Naive thymus-derived CD4-positive, alpha-beta T cell (primary cell): ENCODE measurements at regions of chr5 and their contacts with region 1.

Region 1: GRCh38 chr5:121962347-121962670 is 534 bp downstream of the SRFBP1 start:
- DNase-seq: no peak
- ATAC-seq: no peak
- H3K4me3 ChIP-seq: peak overlapping the region; percentile 85
- H3K4me3 Mint-ChIP-seq: peak overlapping the region; percentile 95 to 99 (median 98)
- H3K27ac ChIP-seq: peak overlapping the region; percentile 73
- H3K27ac Mint-ChIP-seq: peak overlapping the region; percentile 93 to 98 (median 96)
- H3K4me1 ChIP-seq: peaks cover 9 to 16% of the 10 kb centered on the region in 2 donors
- H3K4me1 Mint-ChIP-seq: peaks cover 30 to 51% (median 47%) of the 10 kb centered on the region in 7 donors
- H3K27me3 ChIP-seq: no peaks in the 10 kb centered on the region
- H3K27me3 Mint-ChIP-seq: peaks cover 0 to 21% (median 9%) of the 10 kb centered on the region in 5 donors

Region 2: GRCh38 chr5:122014236-122014935 is 52.1 kb after region 1 on chr5:
- CTCF ChIA-PET with region 1: no interaction called
- POLR2A ChIA-PET with region 1: no interaction called
- intact Hi-C with region 1: no loop called
- DNase-seq: no peak
- ATAC-seq: no peak
- H3K4me3 ChIP-seq: no peak overlapping the region
- H3K4me3 Mint-ChIP-seq: no peak overlapping the region
- H3K27ac ChIP-seq: no peak overlapping the region
- H3K27ac Mint-ChIP-seq: no peak overlapping the region
- H3K4me1 ChIP-seq: no peaks in the 10 kb centered on the region
- H3K4me1 Mint-ChIP-seq: peaks cover 4 to 21% (median 13%) of the 10 kb centered on the region in 7 donors
- H3K27me3 ChIP-seq: no peaks in the 10 kb centered on the region
- H3K27me3 Mint-ChIP-seq: no peaks in the 10 kb centered on the region

Region 3: DNA sequence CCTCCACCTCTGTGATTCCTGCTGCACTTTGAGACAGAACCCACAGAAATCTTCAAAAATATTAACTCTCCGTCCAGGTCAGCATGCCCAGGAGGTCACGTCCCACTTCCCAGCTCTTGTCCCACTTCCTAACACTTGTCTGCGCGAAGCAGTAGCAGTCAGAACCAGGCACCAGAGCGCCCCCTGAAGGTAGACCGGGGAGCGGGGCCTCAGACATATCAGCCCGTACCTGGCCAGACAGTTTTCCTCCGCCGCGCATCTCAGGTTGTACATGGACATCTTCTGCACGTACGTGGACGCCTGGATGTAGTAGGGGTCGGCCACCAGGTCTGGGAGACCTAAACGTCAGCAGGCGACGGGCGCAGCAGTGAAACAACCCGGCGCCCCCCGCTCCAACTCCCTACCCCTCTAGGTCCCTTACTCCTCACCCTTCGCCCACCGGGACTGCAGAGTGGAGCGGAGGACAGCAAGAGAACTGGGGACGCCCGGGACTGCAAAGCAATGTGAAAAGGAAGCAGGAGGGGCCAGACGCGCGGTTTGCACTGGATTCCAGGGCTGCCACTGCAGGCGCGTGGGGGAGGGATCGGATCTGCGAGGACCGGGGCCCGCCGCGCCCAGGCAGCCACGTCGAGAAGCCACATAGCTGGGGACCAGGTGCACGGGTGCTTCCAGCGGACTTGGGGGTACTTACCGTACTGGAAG is 114.5 kb after region 1 on chr5:
- CTCF ChIA-PET with region 1: no interaction called
- POLR2A ChIA-PET with region 1: no interaction called
- intact Hi-C with region 1: loop called in 1 of 2 experiments (anchors 5 kb)
- DNase-seq: peak in 3 of 9 donors; percentile 4 to 59 (median 5)
- ATAC-seq: peak; percentile 32
- H3K4me3 ChIP-seq: no peak overlapping the region
- H3K4me3 Mint-ChIP-seq: peak overlapping the region; percentile 64 to 80 (median 76)
- H3K27ac ChIP-seq: no peak overlapping the region
- H3K27ac Mint-ChIP-seq: peak overlapping the region in 1 of 9 donors; percentile 38
- H3K4me1 ChIP-seq: peaks cover 0 to 7% of the 10 kb centered on the region in 2 donors
- H3K4me1 Mint-ChIP-seq: peaks cover 0 to 23% (median 17%) of the 10 kb centered on the region in 7 donors
- H3K27me3 ChIP-seq: peaks cover 0 to 16% of the 10 kb centered on the region in 2 donors
- H3K27me3 Mint-ChIP-seq: peaks cover 57 to 76% (median 62%) of the 10 kb centered on the region in 5 donors

Region 4: DNA sequence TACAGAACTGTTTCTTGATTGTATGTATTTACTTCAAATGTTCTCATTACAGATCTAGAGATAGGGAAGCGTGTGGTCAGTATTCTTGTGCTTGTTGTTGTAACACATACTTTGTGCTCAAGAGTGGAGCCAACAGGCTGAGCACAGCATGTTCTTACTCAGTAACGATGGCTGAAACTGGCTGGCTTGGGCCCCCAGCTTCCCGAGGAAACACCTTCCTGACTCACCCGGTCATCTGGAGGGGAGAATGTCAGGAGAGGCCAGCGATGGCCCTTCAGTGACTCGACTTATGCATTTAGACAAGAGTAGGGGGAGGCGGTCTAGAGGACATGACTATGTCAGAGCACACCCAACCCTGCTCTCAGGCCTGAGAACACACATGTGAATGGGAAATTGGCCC is 192.6 kb after region 1 on chr5:
- CTCF ChIA-PET with region 1: no interaction called
- POLR2A ChIA-PET with region 1: no interaction called
- intact Hi-C with region 1: loop called in 1 of 2 experiments (anchors 5 kb)
- DNase-seq: no peak
- ATAC-seq: no peak
- H3K4me3 ChIP-seq: no peak overlapping the region
- H3K4me3 Mint-ChIP-seq: no peak overlapping the region
- H3K27ac ChIP-seq: no peak overlapping the region
- H3K27ac Mint-ChIP-seq: peak overlapping the region in 1 of 9 donors; percentile 43
- H3K4me1 ChIP-seq: no peaks in the 10 kb centered on the region
- H3K4me1 Mint-ChIP-seq: peaks cover 0 to 26% (median 9%) of the 10 kb centered on the region in 7 donors
- H3K27me3 ChIP-seq: no peaks in the 10 kb centered on the region
- H3K27me3 Mint-ChIP-seq: no peaks in the 10 kb centered on the region